ENCODE measurements at regions of chrX and their contacts with region 1.

Region 1: GRCh38 chrX:74382613-74383012 is 38.7 kb upstream of the SLC16A2 start:
- DNase-seq: peak; percentile 57 to 69
- ATAC-seq: peak; percentile 96 to 99
- H3K4me3 ChIP-seq: no peak overlapping the region
- H3K27ac ChIP-seq: peak overlapping the region in 1 of 2 experiments; percentile 52; a peak in 2 of 6 replicates
- H3K4me1 ChIP-seq: peaks cover 8% of the 10 kb centered on the region; the same call in 1 of the 3 replicates
- CTCF ChIP-seq: peak; percentile 72
- EP300 ChIP-seq: no peak
- POLR2A ChIP-seq: no peak
- RAD21 ChIP-seq: peak; percentile 60 to 70

Region 2: GRCh38 chrX:74207539-74207938 is 175.1 kb before region 1 on chrX:
- CTCF ChIA-PET with region 1: no interaction called
- POLR2A ChIA-PET with region 1: no interaction called
- DNase-seq: no peak
- ATAC-seq: no peak
- H3K4me3 ChIP-seq: no peak overlapping the region
- H3K27ac ChIP-seq: no peak overlapping the region
- H3K4me1 ChIP-seq: no peaks in the 10 kb centered on the region
- CTCF ChIP-seq: no peak
- EP300 ChIP-seq: no peak
- POLR2A ChIP-seq: no peak
- RAD21 ChIP-seq: no peak

Region 3: DNA sequence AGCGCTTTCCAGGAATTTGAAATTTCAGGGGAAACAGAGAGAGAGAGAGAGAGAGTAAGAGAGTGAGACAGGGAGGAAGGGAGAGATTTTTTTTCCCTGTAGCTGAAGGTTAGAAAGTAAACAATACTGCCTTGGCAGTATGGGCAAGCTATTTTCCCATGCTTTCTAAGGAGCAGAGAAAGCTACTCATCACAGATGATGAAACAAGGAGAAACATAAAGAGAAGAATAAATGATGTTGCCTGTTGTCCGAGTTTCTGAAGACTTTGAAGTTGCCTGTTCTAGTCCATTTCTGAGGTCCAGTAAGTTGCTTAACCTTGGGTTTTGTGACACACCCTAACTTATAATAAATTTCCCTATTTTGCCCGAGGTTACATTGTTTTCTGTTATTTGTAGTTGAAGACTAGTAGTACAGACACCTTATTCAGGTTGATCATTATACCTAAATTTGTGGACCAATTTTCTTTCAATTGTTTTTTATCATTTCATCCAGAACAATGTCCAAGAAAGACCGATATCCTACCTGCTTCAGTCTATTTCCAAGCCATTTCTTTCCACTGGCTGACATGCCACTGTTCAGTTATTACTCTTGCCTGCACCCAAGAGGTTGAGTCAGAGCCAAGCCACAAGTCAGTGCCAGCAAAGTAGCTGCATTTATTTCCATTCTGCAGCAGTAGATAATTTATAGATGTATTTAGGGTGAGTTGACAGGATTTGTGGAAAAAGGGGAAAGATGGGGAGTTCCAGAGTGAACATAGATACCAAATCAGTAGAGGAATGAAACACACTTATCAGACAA is 11.0 kb before region 1 on chrX:
- CTCF ChIA-PET with region 1: interaction called, 24 read pairs
- POLR2A ChIA-PET with region 1: no interaction called
- DNase-seq: no peak
- ATAC-seq: peak in 1 of 2 experiments; percentile 24; a peak in 1 of 6 replicates
- H3K4me3 ChIP-seq: no peak overlapping the region
- H3K27ac ChIP-seq: peak overlapping the region in 1 of 2 experiments; percentile 33; a peak in 2 of 6 replicates
- H3K4me1 ChIP-seq: peaks cover 5% of the 10 kb centered on the region; the same call in 2 of the 3 replicates
- CTCF ChIP-seq: no peak
- EP300 ChIP-seq: no peak
- POLR2A ChIP-seq: no peak
- RAD21 ChIP-seq: no peak

Region 4: GRCh38 chrX:74438764-74439163 is 56.2 kb after region 1 on chrX:
- CTCF ChIA-PET with region 1: no interaction called
- POLR2A ChIA-PET with region 1: no interaction called
- DNase-seq: no peak
- ATAC-seq: no peak
- H3K4me3 ChIP-seq: no peak overlapping the region
- H3K27ac ChIP-seq: no peak overlapping the region
- H3K4me1 ChIP-seq: no peaks in the 10 kb centered on the region
- CTCF ChIP-seq: no peak
- EP300 ChIP-seq: no peak
- POLR2A ChIP-seq: no peak
- RAD21 ChIP-seq: no peak

Region 5: DNA sequence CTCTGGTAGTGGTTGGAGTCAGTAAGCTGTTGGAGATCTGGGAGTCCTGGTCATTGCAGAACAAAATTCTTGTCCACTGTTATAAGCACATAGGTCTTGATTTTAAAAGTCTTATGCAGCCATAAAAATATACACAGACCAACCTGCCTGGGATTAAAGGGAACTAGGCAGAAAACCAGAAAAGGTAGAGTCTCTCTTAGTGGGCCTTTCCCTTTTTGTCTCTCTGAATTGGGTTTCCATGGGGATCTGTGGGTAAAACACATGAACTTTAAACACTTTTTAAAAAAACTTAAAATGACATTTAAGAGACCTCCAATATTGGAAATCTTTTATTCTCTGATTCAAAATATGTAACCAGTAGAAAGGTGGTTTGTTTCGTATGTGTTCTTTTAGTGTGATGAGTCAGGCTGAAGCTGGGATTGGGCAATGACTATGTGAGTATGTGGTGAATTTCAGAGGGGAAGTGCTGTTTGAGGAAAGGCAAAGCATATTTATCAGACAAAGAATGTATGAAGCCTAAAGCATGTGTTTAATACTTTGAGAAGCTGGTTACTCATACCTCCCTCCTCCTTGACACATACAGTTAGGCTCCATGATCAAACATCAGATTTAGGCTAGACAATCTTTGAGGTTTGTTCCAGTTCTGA is 68.3 kb after region 1 on chrX:
- CTCF ChIA-PET with region 1: interaction called, 25 read pairs
- POLR2A ChIA-PET with region 1: no interaction called
- DNase-seq: peak; percentile 29 to 64
- ATAC-seq: peak; percentile 89 to 90
- H3K4me3 ChIP-seq: no peak overlapping the region
- H3K27ac ChIP-seq: peak overlapping the region; percentile 62 to 87
- H3K4me1 ChIP-seq: peaks cover 34% of the 10 kb centered on the region
- CTCF ChIP-seq: no peak
- EP300 ChIP-seq: peak in 1 of 2 experiments; percentile 47; a peak in 2 of 5 replicates
- POLR2A ChIP-seq: no peak
- RAD21 ChIP-seq: no peak

Region 6: GRCh38 chrX:74540605-74541249 is 158.1 kb after region 1 on chrX:
- CTCF ChIA-PET with region 1: interaction called, 51 read pairs
- POLR2A ChIA-PET with region 1: no interaction called
- DNase-seq: no peak
- ATAC-seq: no peak
- H3K4me3 ChIP-seq: no peak overlapping the region
- H3K27ac ChIP-seq: no peak overlapping the region
- H3K4me1 ChIP-seq: no peaks in the 10 kb centered on the region
- CTCF ChIP-seq: no peak
- EP300 ChIP-seq: no peak
- POLR2A ChIP-seq: no peak
- RAD21 ChIP-seq: no peak

Region 7: DNA sequence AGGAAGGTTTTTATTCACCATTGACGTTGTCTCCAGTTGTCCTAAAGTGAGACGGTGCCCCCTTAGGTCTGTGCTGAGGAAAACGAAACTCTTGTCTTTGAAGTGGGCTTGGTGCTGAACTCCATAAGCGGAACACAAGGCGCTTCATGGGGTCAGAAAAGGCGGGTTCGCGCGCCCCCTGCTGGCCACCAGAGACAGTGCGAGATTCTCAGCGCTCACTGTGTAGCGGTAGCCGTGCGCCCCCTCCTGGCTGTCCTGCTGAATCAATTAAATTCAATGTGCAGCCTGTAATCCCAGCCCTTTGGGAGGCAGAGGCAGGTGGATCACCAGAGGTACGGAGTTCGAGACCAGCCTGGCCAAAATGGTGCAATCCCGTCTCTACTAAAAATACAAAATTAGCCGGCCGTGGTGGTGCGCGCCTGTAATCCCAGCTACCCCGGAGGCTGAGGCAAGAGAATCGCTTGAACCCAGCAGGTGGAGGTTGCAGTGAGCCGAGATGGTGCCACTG is 167.7 kb after region 1 on chrX:
- CTCF ChIA-PET with region 1: interaction called, 51 read pairs
- POLR2A ChIA-PET with region 1: no interaction called
- DNase-seq: peak; percentile 34 to 81
- ATAC-seq: peak; percentile 93 to 95
- H3K4me3 ChIP-seq: no peak overlapping the region
- H3K27ac ChIP-seq: 0 out of 6 replicates have a peak overlapping the region, but pooled peaks of 1 of the 2 experiments have one; percentile 12
- H3K4me1 ChIP-seq: no peaks in the 10 kb centered on the region
- CTCF ChIP-seq: peak; percentile 98
- EP300 ChIP-seq: no peak
- POLR2A ChIP-seq: no peak
- RAD21 ChIP-seq: peak; percentile 97 to 98

Region 8: DNA sequence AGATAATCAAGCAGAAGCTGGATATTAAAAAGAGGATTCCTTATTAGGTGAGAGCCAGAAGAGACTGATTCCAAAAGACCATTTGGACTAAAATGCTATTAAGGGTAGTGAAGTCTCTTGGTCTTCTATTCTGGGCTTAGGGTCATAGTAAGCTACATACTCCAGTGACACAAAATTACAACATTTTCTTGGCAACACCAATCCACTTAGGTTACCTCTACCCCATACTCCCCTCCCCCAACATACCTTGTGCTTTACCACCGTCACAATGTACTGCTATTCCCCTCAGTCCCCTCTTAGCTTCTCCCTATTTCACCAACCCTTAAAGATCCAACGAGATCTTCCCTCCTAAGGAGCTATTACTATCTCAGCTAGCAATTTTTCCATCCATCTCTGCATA is 220.4 kb after region 1 on chrX:
- CTCF ChIA-PET with region 1: no interaction called
- POLR2A ChIA-PET with region 1: no interaction called
- DNase-seq: no peak
- ATAC-seq: peak in 1 of 2 experiments; percentile 35; a peak in 2 of 6 replicates
- H3K4me3 ChIP-seq: no peak overlapping the region
- H3K27ac ChIP-seq: no peak overlapping the region
- H3K4me1 ChIP-seq: peaks cover 13% of the 10 kb centered on the region; the same call in 2 of the 3 replicates
- CTCF ChIP-seq: no peak
- EP300 ChIP-seq: no peak
- POLR2A ChIP-seq: no peak
- RAD21 ChIP-seq: no peak

Measured in A549 (cell line).